Activated T-helper 1 cell treated with anti-CD3 and anti-CD28 coated beads, Interleukin-12 subunit alpha, Interleukin-12 subunit beta, Interleukin-2, Interleukin-4 antibody, amounts not matched to agents 30 ng/mL and 10 ng/mL and 1 ng/mL, durations not matched to agents 14 hours and 24 hours and 36 hours (primary cell): ENCODE measurements at regions of chr4 and their contacts with region 1.

Region 1: GRCh38 chr4:184335520-184335919 is 117.8 kb upstream of the ENPP6 start:
- DNase-seq: no peak
- H3K4me3 Mint-ChIP-seq: peak overlapping the region; percentile 1
- H3K27ac Mint-ChIP-seq: peak overlapping the region; percentile 64
- H3K4me1 Mint-ChIP-seq: peaks cover 54% of the 10 kb centered on the region
- H3K27me3 Mint-ChIP-seq: no peaks in the 10 kb centered on the region

Region 2: DNA sequence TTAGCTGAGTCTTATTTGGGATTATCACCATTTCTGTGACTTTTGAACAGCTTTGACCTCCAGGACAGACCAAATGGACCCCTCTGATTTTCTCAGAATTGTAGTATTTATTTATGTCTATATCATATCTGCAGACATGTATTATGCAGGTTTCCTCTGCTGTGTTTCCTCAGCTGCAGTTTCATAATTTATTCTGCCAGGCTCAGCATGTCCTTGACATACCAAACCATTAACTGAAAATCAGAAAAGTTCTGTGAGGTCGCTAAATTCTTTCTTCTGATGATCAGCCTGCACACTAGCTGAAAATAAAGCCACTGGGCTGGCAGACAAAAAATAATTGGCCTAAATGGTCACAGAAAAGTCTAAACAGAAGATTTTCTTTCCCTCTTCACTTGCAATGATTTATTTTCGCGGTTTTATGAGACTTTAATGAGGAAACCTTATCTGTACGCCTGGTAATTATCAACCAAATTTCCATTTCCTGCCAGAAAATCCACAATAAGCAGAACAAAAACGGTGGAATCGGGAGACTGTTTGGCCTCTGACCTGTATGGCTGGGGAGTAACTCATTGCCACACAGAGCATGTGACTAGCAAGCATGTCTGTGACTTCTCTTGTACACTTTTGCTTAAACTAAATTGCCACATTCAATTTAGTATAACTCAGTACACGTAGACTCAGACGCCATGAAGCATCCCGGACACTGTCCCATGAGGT is 268.8 kb before region 1 on chr4:
- intact Hi-C with region 1: no loop called
- DNase-seq: no peak
- H3K4me3 Mint-ChIP-seq: no peak overlapping the region
- H3K27ac Mint-ChIP-seq: no peak overlapping the region
- H3K4me1 Mint-ChIP-seq: no peaks in the 10 kb centered on the region
- H3K27me3 Mint-ChIP-seq: peaks cover 7% of the 10 kb centered on the region

Region 3: DNA sequence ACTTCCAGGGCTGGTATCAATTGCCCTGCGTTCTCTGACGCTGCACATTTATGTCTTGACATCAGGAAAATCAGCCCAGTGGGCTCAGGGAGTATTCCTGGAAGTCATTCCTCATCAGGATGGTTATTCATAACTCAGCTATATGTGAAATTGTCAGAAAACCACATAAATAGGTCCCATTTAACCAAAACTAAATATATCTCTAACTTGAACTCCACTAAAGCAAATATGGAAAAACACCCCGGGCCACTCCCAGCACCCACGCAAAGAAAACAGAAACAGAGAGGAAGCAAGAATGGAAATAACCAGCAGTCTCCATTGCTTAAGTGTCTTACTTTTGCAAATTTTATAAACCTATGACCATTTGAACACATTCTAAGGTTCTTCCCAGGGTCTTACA is 26.9 kb after region 1 on chr4:
- intact Hi-C with region 1: loop called (anchors 2 kb)
- DNase-seq: no peak
- H3K4me3 Mint-ChIP-seq: peak overlapping the region; percentile 9
- H3K27ac Mint-ChIP-seq: peak overlapping the region; percentile 14
- H3K4me1 Mint-ChIP-seq: peaks cover 27% of the 10 kb centered on the region
- H3K27me3 Mint-ChIP-seq: no peaks in the 10 kb centered on the region

Region 4: DNA sequence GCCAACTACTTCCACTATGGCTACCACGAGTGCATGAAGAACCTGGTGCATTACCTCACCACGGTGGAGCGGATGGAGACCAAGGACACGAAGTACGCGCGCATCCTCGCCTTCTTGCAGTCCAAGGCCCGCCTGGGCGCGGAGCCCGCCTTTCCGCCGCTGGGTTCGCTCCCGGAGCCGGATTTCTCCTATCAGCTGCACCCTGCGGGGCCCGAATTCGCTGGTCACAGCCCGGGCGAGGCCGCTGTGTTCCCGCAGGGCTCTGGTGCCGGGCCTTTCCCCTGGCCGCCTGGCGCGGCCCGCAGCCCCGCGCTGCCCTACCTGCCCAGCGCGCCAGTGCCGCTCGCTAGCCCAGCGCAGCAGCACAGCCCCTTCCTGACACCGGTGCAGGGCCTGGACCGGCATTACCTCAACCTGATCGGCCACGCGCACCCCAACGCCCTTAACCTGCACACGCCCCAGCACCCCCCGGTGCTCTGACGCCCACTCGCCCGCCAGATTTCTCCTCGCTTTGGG is 684.8 kb after region 1 on chr4:
- intact Hi-C with region 1: no loop called
- DNase-seq: no peak
- H3K4me3 Mint-ChIP-seq: no peak overlapping the region
- H3K27ac Mint-ChIP-seq: peak overlapping the region; percentile 55
- H3K4me1 Mint-ChIP-seq: no peaks in the 10 kb centered on the region
- H3K27me3 Mint-ChIP-seq: peaks cover 88% of the 10 kb centered on the region